A673 (cell line): ENCODE measurements at regions of chr16 and their contacts with region 1.

Region 1: GRCh38 chr16:21083729-21084268 is 66.8 kb downstream of the DNAH3 start:
- DNase-seq: peak; percentile 59
- H3K4me3 ChIP-seq: no peak overlapping the region
- H3K27ac ChIP-seq: no peak overlapping the region
- H3K4me1 ChIP-seq: no peaks in the 10 kb centered on the region
- H3K27me3 ChIP-seq: no peaks in the 10 kb centered on the region
- CTCF ChIP-seq: peak; percentile 76

Region 2: DNA sequence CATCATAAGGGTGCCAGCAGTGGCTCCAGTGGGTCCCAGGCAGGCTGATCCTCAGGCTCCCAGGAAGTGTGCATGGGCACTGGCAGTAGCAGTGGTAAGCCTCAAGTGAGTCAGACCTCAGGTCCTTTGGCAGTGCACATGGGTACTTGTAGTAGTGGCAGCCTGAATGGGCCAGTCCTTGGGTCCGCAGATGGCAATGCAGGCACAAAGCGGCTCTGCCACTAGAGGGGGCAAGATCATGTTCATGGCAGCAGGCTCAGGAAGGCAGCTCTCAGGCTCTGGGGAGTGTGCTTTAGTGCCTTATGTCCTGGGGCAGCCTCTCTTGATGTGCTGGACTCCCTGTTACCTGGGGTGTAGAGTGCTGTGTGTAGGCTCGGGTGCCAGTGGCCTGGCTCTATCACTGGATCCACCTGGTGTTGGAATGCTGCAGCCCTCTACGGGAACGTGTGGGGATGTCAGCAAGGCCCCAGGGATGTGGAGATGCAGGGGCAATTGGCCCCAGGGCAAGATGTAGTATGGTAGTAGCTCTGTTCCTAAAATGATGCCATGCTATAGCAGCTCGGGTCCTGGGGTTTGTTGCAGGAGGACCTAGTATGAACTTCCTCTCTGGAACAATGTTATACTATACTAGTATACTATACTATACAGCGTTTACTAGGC is 309.0 kb before region 1 on chr16:
- CTCF ChIA-PET with region 1: no interaction called
- POLR2A ChIA-PET with region 1: no interaction called
- intact Hi-C with region 1: loop called (anchors 10 kb)
- DNase-seq: peak; percentile 71
- H3K4me3 ChIP-seq: no peak overlapping the region
- H3K27ac ChIP-seq: no peak overlapping the region
- H3K4me1 ChIP-seq: no peaks in the 10 kb centered on the region
- H3K27me3 ChIP-seq: peaks cover 9% of the 10 kb centered on the region
- CTCF ChIP-seq: peak; percentile 88

Region 3: DNA sequence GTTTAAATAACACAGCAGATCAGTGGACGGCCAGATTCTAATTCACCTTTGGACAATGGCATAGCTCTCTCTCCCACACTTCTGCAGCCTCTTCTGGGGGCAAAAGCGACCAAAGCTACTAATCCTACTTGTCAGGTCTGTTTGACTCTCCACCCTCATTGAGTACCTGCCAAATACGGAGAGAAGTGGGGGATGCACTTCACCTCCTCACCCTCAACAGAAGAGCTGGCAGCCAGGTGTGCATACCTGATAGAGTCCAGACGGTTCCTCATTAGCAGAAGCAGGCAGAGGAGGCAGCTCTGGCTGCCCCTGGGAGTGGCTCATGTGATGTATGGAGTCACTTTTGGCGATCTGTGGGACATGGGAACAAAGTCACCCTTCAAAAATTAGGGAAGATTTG is 61.9 kb after region 1 on chr16:
- CTCF ChIA-PET with region 1: no interaction called
- POLR2A ChIA-PET with region 1: no interaction called
- intact Hi-C with region 1: loop called (anchors 10 kb)
- DNase-seq: no peak
- H3K4me3 ChIP-seq: no peak overlapping the region
- H3K27ac ChIP-seq: no peak overlapping the region
- H3K4me1 ChIP-seq: no peaks in the 10 kb centered on the region
- H3K27me3 ChIP-seq: no peaks in the 10 kb centered on the region
- CTCF ChIP-seq: no peak